HAP-1 (cell line): ENCODE measurements at regions of chr7 and their contacts with region 1.

Region 1: DNA sequence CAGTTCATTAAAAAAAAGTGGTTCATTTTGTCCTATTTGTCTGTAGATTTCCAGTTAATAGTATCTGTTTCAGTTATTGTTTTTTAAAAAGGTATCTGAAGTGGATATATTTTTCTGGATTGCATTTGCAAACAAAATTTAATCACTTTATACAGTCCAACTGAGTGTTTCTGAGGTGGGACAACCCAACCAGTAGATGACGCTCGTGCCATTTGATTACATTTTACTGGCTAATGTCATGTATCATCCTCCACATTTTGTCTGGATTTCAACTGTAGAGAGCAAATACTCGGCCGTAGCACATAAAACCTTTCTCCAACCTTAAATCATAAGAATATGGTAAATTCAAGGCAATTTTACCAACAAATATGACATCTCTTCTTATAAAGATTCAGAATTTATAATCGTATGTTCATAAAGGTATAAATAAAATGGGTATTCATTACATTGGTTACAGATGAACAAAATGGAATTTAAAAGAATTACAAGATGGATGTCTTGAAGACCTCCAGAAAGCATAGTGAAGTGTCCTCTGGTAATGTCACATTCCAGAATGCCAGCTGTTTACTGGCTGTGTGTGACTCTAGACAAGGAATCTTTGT is 789.0 kb downstream of the PHTF2 start:
- DNase-seq: peak; percentile 58 to 65
- H3K4me3 ChIP-seq: no peak overlapping the region
- H3K4me1 ChIP-seq: no peaks in the 10 kb centered on the region
- H3K27me3 ChIP-seq: no peaks in the 10 kb centered on the region

Region 2: GRCh38 chr7:77765906-77766800 is 821.4 kb before region 1 on chr7:
- in situ Hi-C with region 1: no loop called
- DNase-seq: peak in 1 of 2 experiments; percentile 26
- H3K4me3 ChIP-seq: no peak overlapping the region
- H3K4me1 ChIP-seq: peaks cover 4% of the 10 kb centered on the region; the same call in 1 of the 2 replicates
- H3K27me3 ChIP-seq: no peaks in the 10 kb centered on the region

Region 3: DNA sequence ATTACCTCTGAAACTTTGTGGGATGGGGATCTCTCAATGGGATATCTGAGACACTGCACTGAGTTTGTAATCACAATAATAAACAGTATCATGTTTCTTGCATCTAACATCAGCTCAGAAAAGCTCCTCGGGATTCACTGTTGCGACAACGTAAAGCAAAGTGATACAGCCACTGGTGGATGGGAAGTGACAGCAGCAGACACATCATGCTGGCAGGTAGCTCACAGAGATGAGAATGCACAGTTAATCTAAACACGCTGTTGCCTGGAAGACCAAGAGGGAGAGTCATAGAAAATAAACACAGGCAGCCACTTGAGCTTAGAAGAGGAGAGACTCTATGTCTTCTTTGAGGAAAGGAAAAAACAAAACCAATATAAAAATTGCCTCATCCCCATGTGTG is 352.1 kb after region 1 on chr7:
- in situ Hi-C with region 1: loop called (anchors 25 kb)
- DNase-seq: no peak
- H3K4me3 ChIP-seq: no peak overlapping the region
- H3K4me1 ChIP-seq: no peaks in the 10 kb centered on the region
- H3K27me3 ChIP-seq: no peaks in the 10 kb centered on the region

Region 4: DNA sequence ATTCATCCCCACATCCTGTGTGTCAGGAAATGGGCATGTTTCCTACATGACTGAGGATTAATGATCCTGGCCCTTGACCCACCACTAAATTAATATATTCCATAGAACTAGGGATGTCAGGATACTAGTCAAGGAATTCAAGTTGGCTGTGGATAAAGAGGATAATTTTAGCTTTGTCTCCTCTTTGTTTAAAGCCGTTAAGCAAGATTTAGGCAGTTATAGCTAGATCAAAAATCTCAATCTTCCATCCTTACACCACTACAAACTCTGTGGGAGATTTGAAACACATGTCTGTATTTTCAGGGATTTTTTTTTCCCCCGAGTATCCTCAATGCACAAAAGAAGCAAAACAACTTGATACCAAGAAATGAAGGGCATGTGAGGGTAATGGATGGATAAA is 448.8 kb after region 1 on chr7:
- in situ Hi-C with region 1: no loop called
- DNase-seq: no peak
- H3K4me3 ChIP-seq: no peak overlapping the region
- H3K4me1 ChIP-seq: no peaks in the 10 kb centered on the region
- H3K27me3 ChIP-seq: no peaks in the 10 kb centered on the region

Region 5: GRCh38 chr7:79176859-79177477 is 589.4 kb after region 1 on chr7:
- in situ Hi-C with region 1: loop called (anchors 25 kb)
- DNase-seq: peak; percentile 25 to 47
- H3K4me3 ChIP-seq: no peak overlapping the region
- H3K4me1 ChIP-seq: no peaks in the 10 kb centered on the region
- H3K27me3 ChIP-seq: no peaks in the 10 kb centered on the region